ENCODE measurements at regions of chr12 and their contacts with region 1.

Region 1: DNA sequence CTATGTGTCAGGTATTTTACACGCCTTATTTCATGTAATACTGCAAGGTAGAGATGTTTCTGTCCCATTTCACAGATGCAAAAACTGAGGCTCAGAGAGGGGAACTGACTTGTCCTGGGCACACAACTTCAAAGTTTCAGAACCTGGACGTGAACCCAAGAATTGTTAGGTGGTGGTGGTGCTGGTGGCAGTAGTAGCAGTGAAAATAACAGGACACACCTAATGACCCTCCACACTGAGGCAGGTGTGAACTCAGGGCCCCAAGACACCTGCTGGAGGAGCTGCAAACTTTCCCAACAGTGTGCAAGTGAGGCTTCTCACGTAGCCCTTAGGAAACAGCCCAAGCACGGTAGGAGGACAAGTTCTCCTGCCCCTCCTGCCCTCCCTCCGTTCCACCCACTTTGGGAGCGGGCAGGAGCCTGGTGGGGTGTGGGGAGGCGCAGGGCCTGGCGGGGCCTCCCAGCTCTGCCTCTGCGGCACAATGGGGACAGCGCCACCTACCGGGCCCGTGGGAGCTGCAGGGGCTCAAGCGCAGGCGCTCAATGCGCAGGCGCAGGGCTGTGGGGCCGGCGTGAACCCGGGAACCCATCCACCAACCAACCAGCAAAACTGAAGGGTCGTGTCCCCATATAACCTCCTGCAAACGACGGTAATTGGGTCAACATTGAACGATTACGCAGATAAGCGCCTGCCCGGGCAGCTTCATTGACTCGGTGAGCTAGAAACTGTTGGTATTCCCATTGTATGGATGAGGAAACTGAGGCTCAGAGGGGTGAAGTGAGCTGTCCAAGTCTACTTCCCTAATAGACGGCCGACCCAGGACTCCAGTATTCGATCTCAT is 12.0 kb upstream of the TRPV4 start:
- DNase-seq: peak; percentile 34 to 60
- ATAC-seq: peak; percentile 69 to 90
- H3K4me3 ChIP-seq: peak overlapping the region in 3 of 4 donors; percentile 24 to 54 (median 39)
- H3K27ac ChIP-seq: no peak overlapping the region
- H3K4me1 ChIP-seq: no peaks in the 10 kb centered on the region
- H3K27me3 ChIP-seq: no peaks in the 10 kb centered on the region
- CTCF ChIP-seq: peak; percentile 82 to 98 (median 92)
- POLR2A ChIP-seq: no peak

Region 2: DNA sequence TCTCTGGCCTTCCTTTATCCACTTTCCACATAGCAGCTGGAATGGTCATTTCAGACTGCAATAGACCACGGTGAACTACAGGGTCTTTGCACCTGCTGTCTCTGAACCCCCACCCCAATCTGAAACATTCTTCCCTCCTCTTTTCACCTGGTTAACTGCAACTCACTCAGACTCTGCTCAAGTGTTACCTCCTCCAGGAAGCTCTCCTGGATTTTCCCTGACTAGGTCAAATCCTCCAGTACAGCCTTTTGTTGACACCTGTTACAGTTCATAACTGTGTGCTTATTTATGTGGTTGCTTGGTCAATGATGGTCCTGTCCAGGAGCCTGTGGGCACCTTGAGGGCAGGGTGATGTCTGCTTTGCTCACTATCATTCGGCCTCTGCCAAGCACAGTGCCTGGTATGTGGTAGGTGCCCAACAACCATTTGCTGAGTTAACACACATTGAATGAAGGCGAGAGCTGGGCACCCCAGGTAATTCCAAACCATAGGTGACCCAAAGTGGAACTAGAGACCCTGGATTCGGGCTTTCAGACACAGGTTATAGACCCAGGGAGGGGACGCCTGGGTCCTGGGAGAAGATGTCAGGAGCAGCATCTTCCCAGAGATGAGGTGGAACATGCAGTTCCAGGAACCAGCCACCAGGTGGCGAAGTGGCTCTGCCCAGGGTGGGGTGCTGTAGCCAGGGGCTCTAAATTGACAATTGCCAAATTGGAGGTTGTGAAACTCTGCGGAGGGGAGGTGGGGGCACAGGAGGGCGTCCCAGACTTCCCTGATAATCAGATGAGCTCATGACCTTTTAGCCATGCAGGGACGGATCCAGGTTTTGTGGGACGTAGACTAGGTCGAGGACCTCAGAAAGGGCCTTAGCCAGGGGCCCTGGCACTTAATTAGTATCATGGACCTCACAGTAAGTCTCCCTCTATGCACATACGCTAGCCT is 40.1 kb before region 1 on chr12:
- in situ Hi-C with region 1: no loop called
- intact Hi-C with region 1: loop called (anchors 2 kb)
- DNase-seq: peak; percentile 25 to 43
- ATAC-seq: peak; percentile 72 to 78
- H3K4me3 ChIP-seq: no peak overlapping the region
- H3K27ac ChIP-seq: no peak overlapping the region
- H3K4me1 ChIP-seq: no peaks in the 10 kb centered on the region
- H3K27me3 ChIP-seq: no peaks in the 10 kb centered on the region
- CTCF ChIP-seq: peak; percentile 74 to 98 (median 92)
- POLR2A ChIP-seq: no peak